GM18951 (cell line): ENCODE measurements at regions of chr3 and their contacts with region 1.

Region 1: GRCh38 chr3:120795017-120795648 is 52.6 kb downstream of the GTF2E1 start:
- POLR2A ChIP-seq: no peak

Region 2: GRCh38 chr3:120245386-120245785 is 549.7 kb before region 1 on chr3:
- in situ Hi-C with region 1: loop called (anchors 10 kb)
- POLR2A ChIP-seq: no peak

Region 3: GRCh38 chr3:120561251-120562014 is 233.7 kb before region 1 on chr3:
- in situ Hi-C with region 1: loop called (anchors 5 kb)
- POLR2A ChIP-seq: no peak

Region 4: GRCh38 chr3:121718205-121718846 is 923.2 kb after region 1 on chr3:
- in situ Hi-C with region 1: no loop called
- POLR2A ChIP-seq: no peak